ENCODE measurements at regions of chr3 and their contacts with region 1.

Region 1: GRCh38 chr3:133927540-133928066 is 31.9 kb upstream of the RAB6B start:
- DNase-seq: peak; percentile 91
- CTCF ChIP-seq: peak; percentile 79

Region 2: DNA sequence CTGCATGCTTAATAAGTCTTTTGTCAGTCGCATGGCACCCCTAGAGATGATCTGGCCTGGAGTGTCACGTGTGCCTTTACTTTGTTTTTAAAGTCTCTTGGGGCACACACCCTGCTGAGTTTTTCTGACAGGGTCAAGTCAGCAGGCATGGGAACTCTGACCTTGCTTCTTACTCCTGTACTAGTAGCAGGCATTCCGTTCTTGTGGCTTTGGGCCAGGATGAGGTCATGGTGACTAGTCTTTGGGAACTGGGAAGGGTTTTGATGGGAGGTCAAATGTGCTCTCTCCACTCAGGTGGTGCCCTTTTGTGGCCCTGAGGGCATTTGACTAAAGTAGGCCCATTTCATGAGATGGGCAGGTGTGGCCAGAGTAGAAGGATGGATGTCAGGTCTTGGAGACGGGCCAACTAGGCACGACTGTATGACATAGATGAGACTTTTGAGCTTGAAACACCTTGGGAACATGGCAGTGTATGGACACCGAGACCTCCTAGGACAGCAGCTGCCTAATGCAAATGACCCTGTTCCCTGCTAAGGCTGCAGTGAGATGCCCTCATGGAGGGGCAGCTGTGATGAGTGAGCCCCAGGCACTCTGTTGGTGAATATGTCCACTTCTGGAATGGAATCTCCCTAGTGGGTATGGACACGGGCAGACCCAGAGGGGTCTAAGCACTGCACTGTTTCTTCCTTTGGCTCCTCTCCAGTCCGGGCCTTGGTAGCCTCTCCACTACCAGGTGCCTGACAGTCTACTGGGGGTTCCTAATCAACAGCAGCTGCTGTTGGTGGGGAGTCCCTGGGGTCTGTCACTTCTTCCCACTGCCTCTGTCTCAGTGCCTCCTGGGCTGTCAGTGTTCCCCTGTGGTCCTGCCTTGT is 105.6 kb before region 1 on chr3:
- in situ Hi-C with region 1: loop called (anchors 10 kb)
- DNase-seq: no peak
- CTCF ChIP-seq: no peak

Region 3: GRCh38 chr3:134197681-134198261 is 270.2 kb after region 1 on chr3:
- in situ Hi-C with region 1: loop called (anchors 10 kb)
- DNase-seq: peak; percentile 53
- CTCF ChIP-seq: peak; percentile 71